ENCODE measurements at regions of chr13 and their contacts with region 1.

Region 1: GRCh38 chr13:84951128-84951527 is 848.1 kb downstream of the SLITRK6 start:
- DNase-seq: no peak
- ATAC-seq: no peak
- H3K4me3 ChIP-seq: no peak overlapping the region
- H3K4me3 Mint-ChIP-seq: no peak overlapping the region
- H3K27ac ChIP-seq: no peak overlapping the region
- H3K27ac Mint-ChIP-seq: no peak overlapping the region
- H3K4me1 ChIP-seq: no peaks in the 10 kb centered on the region
- H3K4me1 Mint-ChIP-seq: no peaks in the 10 kb centered on the region
- H3K27me3 ChIP-seq: no peaks in the 10 kb centered on the region
- H3K27me3 Mint-ChIP-seq: no peaks in the 10 kb centered on the region
- CTCF ChIP-seq: no peak

Region 2: GRCh38 chr13:83377491-83377890 is 1573.6 kb before region 1 on chr13:
- CTCF ChIA-PET with region 1: no interaction called
- POLR2A ChIA-PET with region 1: no interaction called
- intact Hi-C with region 1: loop called in 1 of 2 experiments (anchors 10 kb)
- DNase-seq: no peak
- ATAC-seq: no peak
- H3K4me3 ChIP-seq: no peak overlapping the region
- H3K4me3 Mint-ChIP-seq: no peak overlapping the region
- H3K27ac ChIP-seq: no peak overlapping the region
- H3K27ac Mint-ChIP-seq: no peak overlapping the region
- H3K4me1 ChIP-seq: no peaks in the 10 kb centered on the region
- H3K4me1 Mint-ChIP-seq: no peaks in the 10 kb centered on the region
- H3K27me3 ChIP-seq: no peaks in the 10 kb centered on the region
- H3K27me3 Mint-ChIP-seq: no peaks in the 10 kb centered on the region
- CTCF ChIP-seq: no peak